Caco-2 (cell line): ENCODE measurements at regions of chr14 and their contacts with region 1.

Region 1: GRCh38 chr14:33848706-33849454 is 102.0 kb downstream of the EGLN3 start:
- DNase-seq: peak; percentile 83 to 84
- H3K4me3 ChIP-seq: no peak overlapping the region
- H3K4me3 Mint-ChIP-seq: no peak overlapping the region
- H3K27ac Mint-ChIP-seq: no peak overlapping the region
- H3K4me1 ChIP-seq: no peaks in the 10 kb centered on the region
- H3K4me1 Mint-ChIP-seq: peaks cover 8% of the 10 kb centered on the region
- H3K27me3 ChIP-seq: no peaks in the 10 kb centered on the region
- H3K27me3 Mint-ChIP-seq: no peaks in the 10 kb centered on the region
- CTCF ChIP-seq: peak; percentile 65 to 84

Region 2: DNA sequence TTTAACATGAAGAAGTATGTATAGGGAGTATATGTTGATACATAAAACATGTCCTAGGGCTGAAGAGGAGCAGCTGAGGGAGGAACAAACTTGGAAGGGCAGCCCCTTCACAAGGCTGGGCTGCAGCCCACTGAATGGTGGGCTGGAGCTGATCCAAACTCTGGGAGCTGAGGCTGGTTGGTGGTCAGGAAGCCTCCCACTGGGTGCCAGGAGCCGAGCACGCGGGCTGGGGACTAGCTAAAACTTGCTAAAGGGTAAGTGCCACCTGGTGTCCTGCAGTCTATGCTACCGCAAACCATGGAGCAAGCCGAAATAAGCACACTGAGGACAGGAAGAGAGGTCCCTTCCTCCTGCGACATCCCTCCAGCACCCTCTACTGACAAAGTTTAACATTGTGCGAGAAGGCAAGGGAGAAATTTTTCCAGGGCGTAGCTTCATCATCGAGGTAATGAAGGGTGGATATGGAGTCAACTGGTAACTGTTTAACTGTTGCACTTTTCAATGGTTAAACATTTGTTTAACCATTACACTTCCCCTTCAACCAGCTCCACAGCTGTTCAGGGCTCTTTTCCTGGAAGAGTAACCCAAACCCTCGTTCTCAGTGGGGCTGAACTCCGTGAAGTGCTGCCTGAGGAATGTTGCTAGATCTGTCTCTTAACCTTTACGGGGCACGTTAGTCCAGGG is 59.8 kb after region 1 on chr14:
- CTCF ChIA-PET with region 1: interaction called, 4 read pairs
- POLR2A ChIA-PET with region 1: no interaction called
- intact Hi-C with region 1: loop called (anchors 5 kb)
- DNase-seq: no peak
- H3K4me3 ChIP-seq: no peak overlapping the region
- H3K4me3 Mint-ChIP-seq: no peak overlapping the region
- H3K27ac Mint-ChIP-seq: no peak overlapping the region
- H3K4me1 ChIP-seq: peaks cover 12% of the 10 kb centered on the region
- H3K4me1 Mint-ChIP-seq: peaks cover 8% of the 10 kb centered on the region
- H3K27me3 ChIP-seq: no peaks in the 10 kb centered on the region
- H3K27me3 Mint-ChIP-seq: no peaks in the 10 kb centered on the region
- CTCF ChIP-seq: peak in 1 of 2 experiments; percentile 3

Region 3: DNA sequence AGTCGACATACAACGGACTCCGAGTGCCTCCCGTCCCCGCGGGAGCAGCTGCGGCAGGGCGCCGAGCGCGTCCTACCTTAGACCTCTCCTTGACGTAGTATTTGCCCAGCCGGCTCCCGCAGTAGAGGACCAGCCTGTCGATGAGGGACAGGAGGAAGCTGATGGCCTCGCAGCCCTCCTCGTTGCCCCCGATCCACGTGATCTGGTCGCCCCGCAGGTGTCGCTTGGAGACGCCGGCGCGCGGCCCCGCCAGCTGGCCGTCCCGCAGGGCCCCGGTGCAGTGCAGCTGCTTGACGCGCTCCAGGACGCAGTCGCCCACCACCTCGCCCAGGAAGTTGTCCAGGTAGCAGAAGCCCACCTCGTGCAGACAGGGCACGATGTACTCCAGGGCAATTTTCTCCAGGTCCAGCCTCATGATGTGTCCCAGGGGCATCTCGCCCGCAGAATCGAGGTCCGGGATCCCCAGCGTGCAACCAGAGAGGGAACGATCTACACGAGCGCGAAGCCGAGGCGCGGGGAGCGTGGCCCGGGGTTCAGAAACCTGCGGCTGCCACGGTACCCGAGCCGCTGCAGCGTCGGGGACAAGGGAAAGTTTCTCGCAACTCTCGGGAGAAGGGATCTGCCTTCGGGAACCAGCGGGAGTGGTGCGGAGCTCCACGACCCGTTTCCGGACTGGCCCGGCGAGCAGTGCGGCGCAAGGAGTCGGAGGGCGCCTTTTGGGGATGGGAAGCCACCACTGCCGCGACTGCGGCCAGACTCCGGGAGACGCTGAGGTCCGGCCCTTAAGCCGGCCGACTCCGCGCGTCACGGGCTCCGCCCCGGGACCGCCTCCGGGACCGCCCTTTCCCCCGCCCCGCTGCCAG is 101.7 kb after region 1 on chr14 and contains the start of gene EGLN3:
- CTCF ChIA-PET with region 1: interaction called, 3 read pairs
- POLR2A ChIA-PET with region 1: no interaction called
- intact Hi-C with region 1: loop called (anchors 5 kb)
- DNase-seq: peak; percentile 90 to 94
- H3K4me3 ChIP-seq: peak within 1 kb of the TSS; percentile 57
- H3K4me3 Mint-ChIP-seq: peak within 1 kb of the TSS; percentile 92
- H3K27ac Mint-ChIP-seq: peak within 1 kb of the TSS; percentile 70
- H3K4me1 ChIP-seq: peaks cover 9% of the 10 kb centered on the region
- H3K4me1 Mint-ChIP-seq: peaks cover 10% of the 10 kb centered on the region
- H3K27me3 ChIP-seq: no peaks in the 10 kb centered on the region
- H3K27me3 Mint-ChIP-seq: no peaks in the 10 kb centered on the region
- CTCF ChIP-seq: no peak
- total RNA-seq, gene EGLN3: 9.5 and 12.0 TPM in 2 replicates

Region 4: DNA sequence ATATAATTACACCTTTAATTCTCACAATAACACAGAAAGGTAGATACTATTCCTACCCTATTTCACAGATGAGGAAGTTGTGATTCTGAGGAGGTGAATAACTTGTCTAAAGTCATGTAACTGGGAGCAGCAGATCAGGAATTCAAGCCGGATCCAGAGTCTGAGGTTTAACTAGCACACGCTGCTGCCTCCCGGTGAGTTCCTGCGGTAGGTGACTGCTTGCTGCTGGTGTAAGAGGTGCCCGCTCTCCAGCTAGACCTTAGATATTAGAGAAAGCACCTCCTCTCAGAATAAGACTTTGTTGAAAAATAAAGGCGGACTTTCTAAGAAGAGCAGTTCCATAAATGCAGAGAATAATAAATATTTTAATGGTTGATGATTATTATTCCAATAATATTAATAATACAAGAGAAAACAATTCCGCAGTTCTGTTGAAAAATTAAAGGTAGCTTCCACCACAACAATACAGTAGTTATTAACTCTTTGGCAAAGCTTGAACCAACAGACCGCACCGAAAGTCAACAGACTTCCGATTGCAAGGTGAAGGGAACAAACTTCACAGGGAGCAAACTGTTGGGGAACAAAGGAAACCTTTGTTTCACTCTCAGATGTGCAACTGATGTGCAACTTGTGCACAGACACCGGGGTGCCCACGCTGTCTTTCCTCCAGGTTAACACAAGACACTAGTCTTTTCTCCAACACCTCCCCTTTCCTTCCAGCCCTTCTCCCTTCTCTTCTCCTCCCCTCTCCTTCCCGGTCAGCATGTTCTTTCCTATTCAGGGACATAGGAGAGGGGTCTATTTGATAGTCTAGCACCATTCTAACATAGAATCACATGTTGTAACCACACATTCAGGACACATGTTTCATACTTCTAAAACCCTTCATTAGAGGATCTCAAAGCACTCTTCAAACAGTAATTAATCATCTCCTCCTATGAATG is 175.2 kb after region 1 on chr14:
- CTCF ChIA-PET with region 1: no interaction called
- POLR2A ChIA-PET with region 1: no interaction called
- intact Hi-C with region 1: loop called (anchors 2 kb)
- DNase-seq: peak in 1 of 2 experiments; percentile 20
- H3K4me3 ChIP-seq: no peak overlapping the region
- H3K4me3 Mint-ChIP-seq: no peak overlapping the region
- H3K27ac Mint-ChIP-seq: peak overlapping the region; percentile 48
- H3K4me1 ChIP-seq: no peaks in the 10 kb centered on the region
- H3K4me1 Mint-ChIP-seq: peaks cover 9% of the 10 kb centered on the region
- H3K27me3 ChIP-seq: no peaks in the 10 kb centered on the region
- H3K27me3 Mint-ChIP-seq: no peaks in the 10 kb centered on the region
- CTCF ChIP-seq: peak in 1 of 2 experiments; percentile 16